ENCODE measurements at regions of chr5 and their contacts with region 1.

Region 1: DNA sequence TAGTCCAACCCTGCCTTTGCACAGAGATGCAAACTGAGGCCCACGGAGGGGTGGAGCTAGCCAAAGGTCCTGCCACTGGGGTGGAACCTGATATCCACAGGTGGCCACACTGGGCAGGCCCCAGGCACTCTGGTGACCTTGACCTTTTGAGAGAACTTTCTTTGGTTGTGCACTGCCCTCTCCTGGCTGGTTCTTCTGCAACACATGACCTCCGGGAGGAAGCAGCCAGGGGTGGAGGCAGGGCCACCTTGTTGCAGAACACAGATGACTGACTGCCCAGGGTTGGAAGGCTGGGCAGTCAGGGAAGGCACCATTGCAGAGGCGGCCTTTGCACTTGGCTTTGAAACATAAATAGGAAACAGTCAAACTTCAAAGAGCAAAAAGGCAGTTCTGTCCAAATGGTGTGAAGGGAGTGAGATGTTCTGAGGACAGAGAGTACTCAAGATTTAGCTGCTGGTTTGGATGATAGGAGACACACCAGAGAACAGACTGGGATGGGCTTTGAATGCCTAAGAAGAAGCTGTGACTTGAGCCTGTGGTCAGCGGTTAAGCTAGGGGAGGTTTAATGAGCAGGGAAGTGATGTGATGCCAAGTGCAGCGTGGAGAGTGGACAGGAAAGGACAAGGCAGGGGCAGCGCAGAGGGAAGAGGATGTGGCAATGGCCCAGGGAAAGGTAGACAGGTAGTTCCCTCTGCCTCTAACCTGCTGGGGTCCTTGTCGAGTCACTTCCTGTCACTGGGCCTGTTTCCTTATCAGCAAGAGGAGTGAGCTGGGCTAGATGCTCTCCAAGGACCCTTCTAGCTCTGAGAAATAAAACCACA is 6.8 kb upstream of the TCOF1 start:
- DNase-seq: peak; percentile 93
- H3K27ac ChIP-seq: peak overlapping the region; percentile 39; the same call in 1 of the 2 replicates
- CTCF ChIP-seq: peak; percentile 86

Region 2: GRCh38 chr5:150272526-150272925 is 78.2 kb before region 1 on chr5:
- CTCF ChIA-PET with region 1: interaction called, 49 read pairs
- POLR2A ChIA-PET with region 1: interaction called, 5 read pairs
- DNase-seq: peak; percentile 66
- H3K27ac ChIP-seq: peak overlapping the region; percentile 10; the same call in 1 of the 2 replicates
- CTCF ChIP-seq: no peak; the same call in 1 of the 2 replicates

Region 3: DNA sequence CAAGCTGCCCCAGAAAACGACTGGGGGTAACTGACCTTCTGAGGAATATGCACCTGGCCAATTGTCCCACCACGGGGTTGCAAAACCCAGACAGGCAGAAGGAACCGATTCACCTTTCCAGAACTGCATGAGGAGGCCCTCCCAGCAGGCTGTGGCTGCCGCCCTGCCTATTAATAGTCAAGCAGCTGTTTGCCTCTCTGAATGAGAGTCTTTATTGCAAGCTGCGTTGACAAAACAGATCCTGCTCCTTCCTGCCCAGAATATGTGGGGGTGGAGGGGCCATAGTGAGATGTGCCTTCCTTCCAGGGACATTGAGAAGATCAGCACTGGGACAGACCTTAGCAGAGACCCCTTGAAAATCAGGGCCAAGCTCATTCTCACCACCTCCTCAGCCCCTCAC is 11.6 kb before region 1 on chr5:
- CTCF ChIA-PET with region 1: interaction called, 20 read pairs
- POLR2A ChIA-PET with region 1: no interaction called
- DNase-seq: no peak
- H3K27ac ChIP-seq: no peak overlapping the region
- CTCF ChIP-seq: no peak